A549 (cell line): ENCODE measurements at regions of chr17 and their contacts with region 1.

Region 1: DNA sequence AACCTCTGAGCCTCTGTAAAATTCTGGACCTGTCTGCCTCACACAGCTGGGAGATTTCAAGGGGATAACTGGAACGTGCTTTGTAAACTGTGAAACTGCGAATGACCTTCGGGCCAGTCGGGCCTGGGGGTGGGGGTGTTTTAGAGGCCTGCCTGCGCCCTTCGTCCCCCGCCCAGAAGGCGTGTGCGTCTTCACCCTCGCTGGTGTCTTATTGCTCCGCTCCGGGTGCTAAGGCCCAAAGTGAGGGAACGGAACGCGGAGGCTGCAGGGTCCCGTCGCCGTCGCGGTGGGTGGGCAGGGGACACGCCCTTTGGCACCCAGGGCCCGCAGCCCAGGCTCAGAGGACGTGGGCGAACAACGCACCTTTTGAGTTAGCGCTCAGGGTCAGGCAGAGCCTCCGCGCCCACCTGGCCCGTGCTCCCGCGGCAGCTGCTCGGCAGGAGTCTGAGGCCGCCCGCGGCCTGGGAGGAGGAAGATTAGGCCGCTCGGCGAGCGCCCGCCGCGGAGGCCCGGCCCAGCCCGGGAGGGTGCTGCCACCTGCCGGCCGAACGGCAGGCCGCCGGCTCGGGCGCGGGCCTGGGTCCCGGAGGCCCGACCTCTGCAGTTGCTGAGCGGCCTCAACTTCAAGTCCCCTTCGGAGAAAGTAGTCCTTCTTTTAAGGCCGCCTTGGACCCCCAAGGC is 29.7 kb downstream of the DCAKD start:
- DNase-seq: peak; percentile 67 to 93
- ATAC-seq: peak; percentile 63 to 86
- H3K4me3 ChIP-seq: peak overlapping the region; percentile 16; the same call in 1 of the 3 replicates
- H3K27ac ChIP-seq: peak overlapping the region; percentile 55 to 76
- H3K4me1 ChIP-seq: peaks cover 24% of the 10 kb centered on the region
- CTCF ChIP-seq: peak; percentile 99
- EP300 ChIP-seq: no peak
- POLR2A ChIP-seq: no peak; the same call in 1 of the 2 replicates
- RAD21 ChIP-seq: peak; percentile 76 to 96

Region 2: GRCh38 chr17:44864866-44865660 is 156.7 kb before region 1 on chr17:
- CTCF ChIA-PET with region 1: interaction called, 42 read pairs
- POLR2A ChIA-PET with region 1: no interaction called
- DNase-seq: peak; percentile 82 to 88
- ATAC-seq: peak; percentile 80 to 88
- H3K4me3 ChIP-seq: no peak overlapping the region
- H3K27ac ChIP-seq: no peak overlapping the region
- H3K4me1 ChIP-seq: no peaks in the 10 kb centered on the region
- CTCF ChIP-seq: peak; percentile 98
- EP300 ChIP-seq: no peak
- POLR2A ChIP-seq: no peak
- RAD21 ChIP-seq: peak; percentile 77 to 78

Region 3: GRCh38 chr17:44919885-44920564 is 101.7 kb before region 1 on chr17:
- CTCF ChIA-PET with region 1: interaction called, 1,853 read pairs
- POLR2A ChIA-PET with region 1: interaction called, 12 read pairs
- DNase-seq: peak; percentile 89 to 97
- ATAC-seq: peak; percentile 85 to 90
- H3K4me3 ChIP-seq: no peak overlapping the region
- H3K27ac ChIP-seq: peak overlapping the region; percentile 14 to 80; a peak in 4 of 6 replicates
- H3K4me1 ChIP-seq: peaks cover 23% of the 10 kb centered on the region
- CTCF ChIP-seq: peak; percentile 98
- EP300 ChIP-seq: no peak
- POLR2A ChIP-seq: no peak
- RAD21 ChIP-seq: peak; percentile 99

Region 4: DNA sequence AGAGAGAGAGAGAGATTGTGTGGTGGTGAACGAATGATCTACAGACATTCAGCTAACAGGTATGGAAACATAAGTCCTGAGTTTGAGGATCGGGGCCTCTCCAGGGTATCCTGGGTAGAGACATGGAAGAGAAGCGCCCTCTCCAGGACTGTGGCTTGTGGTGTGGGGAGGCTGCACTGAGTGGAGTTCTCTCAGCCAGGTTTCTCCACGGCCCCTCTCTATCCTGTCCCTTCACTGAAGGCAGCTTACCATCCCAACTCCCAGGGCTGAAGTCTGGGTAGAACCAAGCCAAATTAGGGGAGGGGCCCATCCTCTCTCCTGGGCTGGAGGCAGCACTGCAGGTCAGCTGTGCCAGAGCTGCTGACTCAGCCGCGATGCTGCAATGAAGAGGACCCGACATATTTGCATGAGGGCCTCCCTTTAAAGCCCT is 59.8 kb before region 1 on chr17:
- CTCF ChIA-PET with region 1: interaction called, 31 read pairs
- POLR2A ChIA-PET with region 1: no interaction called
- DNase-seq: peak in 1 of 2 experiments; percentile 62
- ATAC-seq: peak; percentile 78 to 89
- H3K4me3 ChIP-seq: no peak overlapping the region
- H3K27ac ChIP-seq: peak overlapping the region in 1 of 2 experiments; percentile 0; a peak in 1 of 6 replicates
- H3K4me1 ChIP-seq: peaks cover 18% of the 10 kb centered on the region
- CTCF ChIP-seq: 0 out of 3 replicates have a peak, but pooled peaks have one; percentile 17
- EP300 ChIP-seq: no peak
- POLR2A ChIP-seq: no peak
- RAD21 ChIP-seq: peak; percentile 13 to 54; a peak in 2 of 5 replicates

Region 5: DNA sequence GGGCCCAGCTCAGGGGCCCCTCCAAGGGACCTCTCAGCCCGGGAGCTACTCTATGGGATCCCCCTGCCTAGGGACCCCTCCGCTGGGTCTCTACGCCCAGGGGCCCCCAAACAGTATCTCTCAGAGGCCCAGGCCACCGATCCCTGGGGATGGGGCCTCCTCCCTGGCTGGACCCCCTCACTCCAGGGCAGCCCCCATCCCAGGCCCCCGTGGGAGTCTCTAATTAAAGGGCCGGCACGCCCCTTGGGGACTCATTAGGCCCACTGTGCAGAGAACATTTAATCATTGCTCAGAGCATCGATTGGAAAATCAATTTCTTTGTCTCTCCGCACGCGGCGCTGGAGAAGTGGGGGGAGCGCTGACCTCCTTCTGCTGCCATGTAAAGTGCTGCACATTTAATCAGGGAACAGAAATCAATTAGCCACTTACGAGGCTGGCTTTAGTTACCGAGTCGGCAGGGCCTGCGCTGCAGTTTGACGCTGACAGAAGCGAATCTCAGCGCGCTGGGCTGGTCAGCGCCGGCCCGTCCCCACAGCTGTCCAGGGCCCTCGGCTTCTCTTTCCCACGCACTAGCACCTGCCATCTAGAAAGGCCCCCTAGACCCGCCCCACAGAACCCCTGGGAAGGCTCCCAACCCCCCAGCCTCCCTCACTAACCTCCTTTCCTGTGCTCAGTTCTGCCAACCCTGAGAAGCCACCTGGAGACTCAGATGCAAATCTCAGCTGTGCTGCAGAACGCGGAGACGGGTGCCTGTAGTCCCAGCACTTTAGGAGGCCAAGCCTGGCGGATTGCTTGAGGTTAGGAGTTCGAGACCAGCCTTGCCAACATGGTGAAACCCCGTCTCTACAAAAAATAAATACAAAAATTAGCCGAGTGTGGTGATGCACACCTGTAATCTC is 33.5 kb before region 1 on chr17:
- CTCF ChIA-PET with region 1: interaction called, 98 read pairs
- POLR2A ChIA-PET with region 1: no interaction called
- DNase-seq: no peak
- ATAC-seq: no peak
- H3K4me3 ChIP-seq: no peak overlapping the region
- H3K27ac ChIP-seq: no peak overlapping the region
- H3K4me1 ChIP-seq: peaks cover 6% of the 10 kb centered on the region; the same call in 1 of the 3 replicates
- CTCF ChIP-seq: no peak
- EP300 ChIP-seq: no peak
- POLR2A ChIP-seq: no peak
- RAD21 ChIP-seq: no peak

Region 6: DNA sequence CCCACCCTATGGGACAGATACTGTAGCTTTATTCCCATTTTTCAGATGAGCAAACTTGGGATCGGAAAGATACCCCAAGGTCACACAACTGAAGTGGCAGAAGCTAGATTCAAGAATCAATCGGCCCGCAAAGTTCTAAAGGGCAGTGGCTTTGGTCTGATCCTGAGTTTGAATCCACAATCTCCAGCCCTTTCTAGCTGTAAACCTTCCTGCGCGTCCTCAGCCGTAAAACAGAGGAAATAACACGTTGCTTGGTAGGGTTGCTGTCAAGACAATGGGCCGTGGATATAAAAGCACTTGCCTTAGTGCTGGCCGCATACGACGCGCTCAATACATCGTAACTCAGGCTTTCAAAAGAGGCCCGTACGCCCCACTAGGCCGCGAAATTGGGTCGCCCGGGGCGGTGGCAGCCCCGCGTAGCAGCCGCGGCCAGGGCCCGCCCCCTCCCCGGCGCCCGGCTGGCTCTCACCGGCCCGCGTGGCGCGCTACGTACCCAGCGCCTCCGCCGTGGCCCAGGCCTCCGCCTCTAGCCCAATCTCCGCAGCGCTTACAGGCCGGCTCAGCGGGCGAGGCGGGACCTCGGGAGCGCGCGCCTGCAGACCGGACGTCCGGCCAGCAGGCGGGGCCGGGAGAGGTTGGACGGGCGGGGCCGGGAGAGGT is 29.4 kb after region 1 on chr17 and contains the start of gene DCAKD:
- CTCF ChIA-PET with region 1: interaction called, 58 read pairs
- POLR2A ChIA-PET with region 1: no interaction called
- DNase-seq: peak; percentile 93 to 97
- ATAC-seq: peak; percentile 97 to 99
- H3K4me3 ChIP-seq: peak within 1 kb of the TSS; percentile 54
- H3K27ac ChIP-seq: peak within 1 kb of the TSS; percentile 91 to 95
- H3K4me1 ChIP-seq: peaks cover 35% of the 10 kb centered on the region
- CTCF ChIP-seq: no peak
- EP300 ChIP-seq: no peak
- POLR2A ChIP-seq: peak; percentile 75
- RAD21 ChIP-seq: no peak
- polyA plus RNA-seq, gene DCAKD: 21.4 and 26.2 TPM in 2 replicates

Region 7: DNA sequence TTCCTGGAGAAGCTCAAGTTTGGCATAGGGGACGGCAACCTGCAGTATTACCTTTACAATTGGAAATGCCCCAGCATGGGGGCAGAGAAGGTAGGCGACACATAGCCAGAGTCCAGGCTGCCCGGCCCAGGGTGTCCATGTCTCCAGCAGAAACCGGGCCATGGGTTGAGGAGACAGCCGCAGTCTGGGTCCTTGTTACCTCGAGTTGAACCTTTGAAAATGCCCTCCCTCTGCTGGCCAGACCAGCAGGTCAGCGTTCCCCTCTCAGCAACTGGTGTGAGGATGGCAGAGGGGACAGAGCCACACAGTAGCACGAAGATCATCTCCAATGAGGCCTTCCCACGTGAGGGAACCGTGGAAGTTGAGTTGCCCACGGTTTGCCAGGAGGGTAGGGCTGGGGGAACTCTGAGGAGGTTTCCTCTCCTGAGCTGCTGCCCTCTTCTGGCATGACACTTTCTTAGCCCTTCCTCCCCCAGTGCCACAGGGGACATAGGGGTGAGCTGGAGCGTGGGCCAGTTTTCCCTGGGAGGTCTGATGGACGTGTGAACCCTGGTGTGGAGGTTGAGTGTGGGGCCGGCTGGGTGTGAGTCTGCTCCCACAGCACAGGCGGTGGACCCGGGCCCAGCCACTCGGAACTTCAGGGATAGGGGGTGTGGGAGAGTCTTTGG is 83.3 kb after region 1 on chr17:
- CTCF ChIA-PET with region 1: interaction called, 40 read pairs
- POLR2A ChIA-PET with region 1: no interaction called
- DNase-seq: no peak
- ATAC-seq: peak; percentile 21 to 35; a peak in 4 of 6 replicates
- H3K4me3 ChIP-seq: no peak overlapping the region
- H3K27ac ChIP-seq: 0 out of 6 replicates have a peak overlapping the region, but pooled peaks of 1 of the 2 experiments have one; percentile 6
- H3K4me1 ChIP-seq: no peaks in the 10 kb centered on the region
- CTCF ChIP-seq: peak; percentile 47
- EP300 ChIP-seq: no peak
- POLR2A ChIP-seq: no peak
- RAD21 ChIP-seq: 0 out of 5 replicates have a peak, but pooled peaks of 1 of the 2 experiments have one; percentile 12

Region 8: DNA sequence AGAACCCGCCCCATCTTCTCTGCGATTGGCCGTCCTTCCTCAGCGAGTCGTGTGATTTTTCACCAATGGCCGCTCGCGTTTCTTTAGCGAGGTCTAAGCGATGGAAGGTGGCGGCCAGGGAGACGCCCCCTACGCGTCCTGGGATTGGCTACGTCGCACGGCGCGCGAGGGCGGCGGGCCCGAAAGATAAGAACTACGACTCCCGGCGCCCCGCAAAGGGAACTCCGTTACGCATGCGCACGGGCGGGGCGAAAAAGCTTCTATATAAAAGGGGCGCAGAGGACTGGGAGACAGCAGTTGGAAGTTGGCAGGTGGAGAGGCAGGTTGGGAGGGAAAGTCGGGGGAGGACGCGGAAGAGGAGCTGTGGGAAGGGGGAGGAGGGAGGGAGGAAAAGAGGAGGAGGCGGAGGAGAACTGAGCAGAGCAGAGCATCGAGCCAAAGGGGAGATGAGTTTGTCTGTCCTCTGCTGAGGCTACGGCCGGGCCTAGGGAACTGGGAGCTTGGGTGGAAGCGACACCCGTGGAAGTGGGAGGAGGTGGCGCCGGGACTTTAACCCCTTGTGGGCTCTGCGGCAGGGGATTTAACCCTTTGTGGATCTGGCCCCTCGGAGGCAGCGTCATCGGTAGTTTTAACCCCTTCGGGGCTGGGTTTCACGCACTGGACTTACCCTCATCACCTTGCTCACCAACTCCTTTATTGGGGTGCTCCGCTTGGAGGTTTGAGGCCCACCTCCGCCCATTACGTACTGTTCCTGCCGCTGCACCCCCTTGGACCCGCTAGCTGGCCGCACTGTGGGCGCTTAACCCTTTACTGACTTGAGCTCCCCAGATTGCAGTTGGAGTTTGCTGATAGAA is 126.7 kb after region 1 on chr17 and contains the start of gene HEXIM1:
- CTCF ChIA-PET with region 1: no interaction called
- POLR2A ChIA-PET with region 1: no interaction called
- DNase-seq: peak; percentile 99 to 100
- ATAC-seq: peak; percentile 74 to 86
- H3K4me3 ChIP-seq: peak within 1 kb of the TSS; percentile 74
- H3K27ac ChIP-seq: peak within 1 kb of the TSS; percentile 97 to 98
- H3K4me1 ChIP-seq: peaks cover 27% of the 10 kb centered on the region
- CTCF ChIP-seq: no peak
- EP300 ChIP-seq: no peak
- POLR2A ChIP-seq: peak; percentile 100
- RAD21 ChIP-seq: peak in 1 of 2 experiments; percentile 7; a peak in 1 of 5 replicates
- polyA plus RNA-seq, gene HEXIM1: 39.3 and 54.0 TPM in 2 replicates

Region 9: GRCh38 chr17:45218895-45219661 is 197.3 kb after region 1 on chr17:
- CTCF ChIA-PET with region 1: no interaction called
- POLR2A ChIA-PET with region 1: no interaction called
- DNase-seq: peak; percentile 85 to 87
- ATAC-seq: peak; percentile 61 to 82
- H3K4me3 ChIP-seq: no peak overlapping the region
- H3K27ac ChIP-seq: peak overlapping the region; percentile 97
- H3K4me1 ChIP-seq: peaks cover 37% of the 10 kb centered on the region
- CTCF ChIP-seq: peak; percentile 99
- EP300 ChIP-seq: no peak
- POLR2A ChIP-seq: no peak
- RAD21 ChIP-seq: peak; percentile 99 to 100

Region 10: DNA sequence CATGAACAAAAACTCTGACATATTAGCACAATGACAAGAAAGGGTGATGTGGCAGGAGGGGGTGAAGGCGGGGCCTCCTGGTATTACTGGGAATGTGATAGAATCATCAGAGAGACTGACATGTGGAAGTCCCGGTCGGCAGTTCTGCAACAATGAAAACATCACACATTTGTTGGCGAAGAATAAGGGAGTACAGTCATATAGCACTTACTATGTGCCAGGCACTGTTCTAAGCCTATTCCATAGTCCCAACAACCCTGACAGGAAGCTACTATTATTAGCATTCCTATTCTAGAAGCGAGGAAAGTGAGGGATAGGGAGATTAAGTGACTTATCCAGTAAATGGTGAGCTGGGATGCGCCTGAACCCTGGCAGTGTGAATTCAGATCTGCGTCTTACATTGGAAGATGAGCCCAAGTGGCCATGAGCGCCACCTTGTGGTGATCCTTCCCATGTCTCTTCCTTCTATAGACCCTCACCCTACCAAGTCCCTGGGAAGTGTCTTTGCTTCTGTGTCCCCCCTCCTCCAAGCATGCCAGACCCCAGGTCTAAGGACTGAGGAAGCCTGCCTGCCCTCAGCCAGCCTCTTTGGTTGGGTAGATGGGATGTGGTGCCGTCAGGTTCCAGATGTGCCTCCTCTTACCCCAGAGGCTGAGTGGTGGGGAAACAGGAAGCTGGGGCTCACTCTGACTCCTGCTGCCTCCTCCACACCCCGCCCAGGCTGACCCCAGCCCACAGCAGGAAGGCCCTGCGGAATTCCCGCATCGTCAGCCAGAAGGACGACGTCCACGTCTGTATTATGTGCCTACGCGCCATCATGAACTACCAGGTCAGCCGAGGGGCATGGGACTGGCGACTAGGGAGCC is 213.9 kb after region 1 on chr17:
- CTCF ChIA-PET with region 1: no interaction called
- POLR2A ChIA-PET with region 1: no interaction called
- DNase-seq: peak; percentile 87 to 93
- ATAC-seq: peak; percentile 60 to 75
- H3K4me3 ChIP-seq: no peak overlapping the region
- H3K27ac ChIP-seq: peak overlapping the region; percentile 35 to 66; a peak in 5 of 6 replicates
- H3K4me1 ChIP-seq: peaks cover 33% of the 10 kb centered on the region
- CTCF ChIP-seq: peak; percentile 95
- EP300 ChIP-seq: no peak
- POLR2A ChIP-seq: no peak
- RAD21 ChIP-seq: peak; percentile 79 to 82

Region 11: GRCh38 chr17:45364531-45365390 is 343.0 kb after region 1 on chr17:
- CTCF ChIA-PET with region 1: no interaction called
- POLR2A ChIA-PET with region 1: no interaction called
- DNase-seq: peak in 1 of 2 experiments; percentile 44
- ATAC-seq: peak; percentile 72 to 78; a peak in 5 of 6 replicates
- H3K4me3 ChIP-seq: no peak overlapping the region
- H3K27ac ChIP-seq: peak overlapping the region; percentile 55 to 82; a peak in 5 of 6 replicates
- H3K4me1 ChIP-seq: peaks cover 34% of the 10 kb centered on the region
- CTCF ChIP-seq: no peak
- EP300 ChIP-seq: no peak
- POLR2A ChIP-seq: no peak
- RAD21 ChIP-seq: no peak